ENCODE measurements at regions of chr11 and their contacts with region 1.

Region 1: GRCh38 chr11:45339729-45340519 is 53.8 kb upstream of the SYT13 start:
- DNase-seq: peak; percentile 14
- H3K4me3 ChIP-seq: peak overlapping the region; percentile 23; the same call in 1 of the 2 replicates
- H3K27me3 ChIP-seq: peaks cover 12% of the 10 kb centered on the region
- CTCF ChIP-seq: peak; percentile 93

Region 2: GRCh38 chr11:45354976-45355705 is 15.2 kb after region 1 on chr11:
- CTCF ChIA-PET with region 1: interaction called, 22 read pairs
- POLR2A ChIA-PET with region 1: no interaction called
- DNase-seq: no peak
- H3K4me3 ChIP-seq: peak overlapping the region; percentile 45
- H3K27me3 ChIP-seq: no peaks in the 10 kb centered on the region; the same call in 1 of the 2 replicates
- CTCF ChIP-seq: no peak

Region 3: GRCh38 chr11:45568049-45568448 is 228.1 kb after region 1 on chr11:
- CTCF ChIA-PET with region 1: no interaction called
- POLR2A ChIA-PET with region 1: no interaction called
- DNase-seq: no peak
- H3K4me3 ChIP-seq: no peak overlapping the region
- H3K27me3 ChIP-seq: peaks cover 2% of the 10 kb centered on the region; the same call in 1 of the 2 replicates
- CTCF ChIP-seq: no peak

Measured in BJ (cell line).